ENCODE measurements at regions of chr6 and their contacts with region 1.

Region 1: DNA sequence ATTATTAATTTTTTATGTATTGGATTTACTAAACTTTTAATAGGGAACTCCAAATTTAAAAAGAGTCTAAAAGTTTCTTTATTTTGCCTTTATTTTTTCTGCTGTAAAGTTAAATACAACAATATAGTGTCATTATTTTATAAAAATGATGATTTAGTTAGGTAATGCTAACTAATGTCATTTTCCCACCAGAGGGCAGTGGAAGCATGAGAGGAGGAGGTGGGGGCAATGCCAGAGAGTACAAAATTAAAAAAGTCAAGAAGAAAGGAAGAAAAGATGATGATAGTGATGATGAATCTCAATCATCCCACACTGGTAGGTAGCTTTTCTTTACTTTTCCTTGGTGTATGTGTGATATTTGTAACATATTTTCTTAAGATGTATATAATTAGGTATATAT is 20.2 kb upstream of the FHL5 start:
- DNase-seq: peak; percentile 42
- H3K4me3 ChIP-seq: no peak overlapping the region
- H3K27ac ChIP-seq: no peak overlapping the region
- H3K4me1 ChIP-seq: no peaks in the 10 kb centered on the region
- CTCF ChIP-seq: peak; percentile 86

Region 2: DNA sequence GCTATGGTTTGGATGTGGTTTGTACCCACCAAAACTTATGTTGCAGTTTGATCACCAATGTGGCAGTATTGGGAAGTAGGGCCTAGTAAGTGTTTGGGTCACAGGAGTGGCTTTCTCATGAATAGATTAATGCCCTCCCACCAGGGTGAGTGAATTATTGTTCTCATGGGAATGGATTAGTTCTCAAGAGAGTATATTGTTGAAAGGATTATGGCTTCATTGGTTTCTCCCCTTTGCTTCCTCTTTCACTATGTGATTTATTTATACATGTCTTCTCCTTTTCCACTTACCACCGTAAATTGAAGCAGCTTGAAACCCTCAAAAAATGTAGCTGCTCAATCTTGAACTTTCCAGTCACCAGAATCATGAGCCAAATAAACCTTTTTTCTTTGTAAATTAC is 10.3 kb before region 1 on chr6:
- CTCF ChIA-PET with region 1: no interaction called
- POLR2A ChIA-PET with region 1: interaction called, 12 read pairs
- intact Hi-C with region 1: no loop called
- DNase-seq: peak; percentile 30
- H3K4me3 ChIP-seq: no peak overlapping the region
- H3K27ac ChIP-seq: no peak overlapping the region
- H3K4me1 ChIP-seq: peaks cover 9% of the 10 kb centered on the region
- CTCF ChIP-seq: no peak

Region 3: GRCh38 chr6:96563853-96564252 is 21.2 kb after region 1 on chr6:
- CTCF ChIA-PET with region 1: no interaction called
- POLR2A ChIA-PET with region 1: interaction called, 10 read pairs
- intact Hi-C with region 1: no loop called
- DNase-seq: no peak
- H3K4me3 ChIP-seq: no peak overlapping the region
- H3K27ac ChIP-seq: no peak overlapping the region
- H3K4me1 ChIP-seq: no peaks in the 10 kb centered on the region
- CTCF ChIP-seq: no peak

Region 4: GRCh38 chr6:96626759-96627364 is 84.2 kb after region 1 on chr6:
- CTCF ChIA-PET with region 1: no interaction called
- POLR2A ChIA-PET with region 1: interaction called, 3 read pairs
- intact Hi-C with region 1: loop called (anchors 1 kb)
- DNase-seq: peak; percentile 66
- H3K4me3 ChIP-seq: no peak overlapping the region
- H3K27ac ChIP-seq: no peak overlapping the region
- H3K4me1 ChIP-seq: peaks cover 19% of the 10 kb centered on the region
- CTCF ChIP-seq: peak; percentile 83

Region 5: GRCh38 chr6:96735332-96735731 is 192.6 kb after region 1 on chr6:
- CTCF ChIA-PET with region 1: no interaction called
- POLR2A ChIA-PET with region 1: no interaction called
- intact Hi-C with region 1: no loop called
- DNase-seq: no peak
- H3K4me3 ChIP-seq: no peak overlapping the region
- H3K27ac ChIP-seq: no peak overlapping the region
- H3K4me1 ChIP-seq: no peaks in the 10 kb centered on the region
- CTCF ChIP-seq: no peak

Region 6: GRCh38 chr6:96760153-96760687 is 217.5 kb after region 1 on chr6:
- CTCF ChIA-PET with region 1: no interaction called
- POLR2A ChIA-PET with region 1: no interaction called
- intact Hi-C with region 1: loop called (anchors 2 kb)
- DNase-seq: peak; percentile 4
- H3K4me3 ChIP-seq: no peak overlapping the region
- H3K27ac ChIP-seq: no peak overlapping the region
- H3K4me1 ChIP-seq: no peaks in the 10 kb centered on the region
- CTCF ChIP-seq: peak; percentile 44; the same call in 1 of the 2 replicates

Region 7: GRCh38 chr6:96897383-96898240 is 354.9 kb after region 1 on chr6 and contains the start of gene NDUFAF4:
- CTCF ChIA-PET with region 1: no interaction called
- POLR2A ChIA-PET with region 1: no interaction called
- intact Hi-C with region 1: loop called (anchors 1 kb)
- DNase-seq: peak; percentile 96
- H3K4me3 ChIP-seq: peak within 1 kb of the TSS; percentile 97
- H3K27ac ChIP-seq: peak within 1 kb of the TSS; percentile 77
- H3K4me1 ChIP-seq: peaks cover 33% of the 10 kb centered on the region
- CTCF ChIP-seq: peak; percentile 88
- total RNA-seq, gene NDUFAF4: 29.3 and 31.5 TPM in 2 replicates